ENCODE measurements at regions of chr12 and their contacts with region 1.

Region 1: DNA sequence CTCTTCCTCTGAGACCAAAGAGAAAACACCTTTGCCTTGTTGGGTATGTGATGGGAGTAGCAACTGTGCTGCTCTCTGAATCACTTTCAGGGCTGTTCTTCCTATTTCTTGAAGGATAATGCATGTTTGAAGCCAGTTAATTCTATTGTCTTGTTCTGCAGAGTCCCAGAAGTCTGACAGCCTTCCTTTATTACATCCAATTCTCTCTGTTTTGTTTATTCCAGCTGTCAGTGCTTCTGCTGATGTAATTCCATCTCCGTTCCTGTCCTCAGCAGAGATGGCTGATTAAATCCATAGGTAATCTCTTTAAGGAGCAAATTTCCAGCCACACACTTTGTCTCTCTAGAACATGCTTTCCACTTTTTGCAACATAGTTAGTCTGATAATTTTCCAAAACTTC is 59.7 kb downstream of the MGAT4C start:
- DNase-seq: no peak
- ATAC-seq: no peak
- H3K4me3 ChIP-seq: no peak overlapping the region
- H3K4me3 Mint-ChIP-seq: no peak overlapping the region
- H3K27ac ChIP-seq: no peak overlapping the region
- H3K27ac Mint-ChIP-seq: no peak overlapping the region
- H3K4me1 ChIP-seq: no peaks in the 10 kb centered on the region
- H3K4me1 Mint-ChIP-seq: no peaks in the 10 kb centered on the region
- H3K27me3 ChIP-seq: no peaks in the 10 kb centered on the region
- H3K27me3 Mint-ChIP-seq: no peaks in the 10 kb centered on the region
- CTCF ChIP-seq: no peak

Region 2: GRCh38 chr12:85253823-85254222 is 942.6 kb before region 1 on chr12:
- CTCF ChIA-PET with region 1: no interaction called
- POLR2A ChIA-PET with region 1: no interaction called
- intact Hi-C with region 1: loop called in 1 of 2 experiments (anchors 5 kb)
- DNase-seq: no peak
- ATAC-seq: no peak
- H3K4me3 ChIP-seq: no peak overlapping the region
- H3K4me3 Mint-ChIP-seq: no peak overlapping the region
- H3K27ac ChIP-seq: no peak overlapping the region
- H3K27ac Mint-ChIP-seq: no peak overlapping the region
- H3K4me1 ChIP-seq: no peaks in the 10 kb centered on the region
- H3K4me1 Mint-ChIP-seq: no peaks in the 10 kb centered on the region
- H3K27me3 ChIP-seq: no peaks in the 10 kb centered on the region
- H3K27me3 Mint-ChIP-seq: no peaks in the 10 kb centered on the region
- CTCF ChIP-seq: no peak